Naive thymus-derived CD4-positive, alpha-beta T cell (primary cell): ENCODE measurements at regions of chr1 and their contacts with region 1.

Region 1: DNA sequence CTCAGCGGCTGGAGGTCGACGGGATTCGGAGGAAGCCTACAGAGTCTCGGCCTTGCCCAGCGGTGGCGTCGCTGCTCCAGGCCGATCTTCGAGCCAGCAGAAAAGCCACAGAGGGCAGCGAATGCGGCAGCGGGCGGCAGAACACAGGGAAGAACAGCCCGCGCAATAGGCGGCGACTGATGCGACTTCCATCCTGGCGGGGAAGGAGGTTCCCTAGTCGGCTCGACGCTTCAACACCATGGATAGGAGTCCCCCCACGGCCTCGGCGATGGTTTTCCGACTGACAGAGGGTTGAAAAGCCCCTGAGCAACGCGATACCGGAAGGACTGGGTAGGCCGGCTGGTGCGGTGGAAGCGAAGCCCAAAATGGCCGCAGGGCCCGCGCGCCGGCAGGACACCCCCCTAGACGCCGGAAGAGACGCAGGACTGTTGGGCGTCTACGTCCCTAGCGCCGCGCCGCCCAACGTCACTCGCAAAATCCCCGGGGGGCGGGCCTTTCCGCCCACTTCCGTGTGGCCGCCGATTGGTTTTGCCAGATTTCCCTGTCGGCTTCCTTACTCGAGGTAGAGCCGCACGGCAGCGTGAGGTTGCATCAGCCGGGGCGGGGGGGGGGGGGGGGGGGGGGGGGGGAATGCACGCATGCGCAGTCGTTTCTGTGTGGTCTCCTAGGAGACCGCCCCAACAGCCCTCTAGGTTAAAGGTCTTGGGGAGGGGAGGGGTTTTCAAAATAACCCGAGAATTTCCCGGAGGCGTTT is at the start of gene PPP1R15B:
- DNase-seq: peak; percentile 92 to 99 (median 98)
- ATAC-seq: peak; percentile 91
- H3K4me3 ChIP-seq: peak within 1 kb of the TSS; percentile 99
- H3K4me3 Mint-ChIP-seq: peak within 1 kb of the TSS; percentile 92 to 99 (median 97)
- H3K27ac ChIP-seq: peak within 1 kb of the TSS; percentile 100
- H3K27ac Mint-ChIP-seq: peak within 1 kb of the TSS; percentile 97 to 100 (median 99)
- H3K4me1 ChIP-seq: peaks cover 0 to 5% of the 10 kb centered on the region in 2 donors
- H3K4me1 Mint-ChIP-seq: peaks cover 8 to 23% (median 14%) of the 10 kb centered on the region in 7 donors
- H3K27me3 ChIP-seq: no peaks in the 10 kb centered on the region
- H3K27me3 Mint-ChIP-seq: no peaks in the 10 kb centered on the region
- total RNA-seq, gene PPP1R15B: 69.5 to 175 (median 73.0) TPM

Region 2: DNA sequence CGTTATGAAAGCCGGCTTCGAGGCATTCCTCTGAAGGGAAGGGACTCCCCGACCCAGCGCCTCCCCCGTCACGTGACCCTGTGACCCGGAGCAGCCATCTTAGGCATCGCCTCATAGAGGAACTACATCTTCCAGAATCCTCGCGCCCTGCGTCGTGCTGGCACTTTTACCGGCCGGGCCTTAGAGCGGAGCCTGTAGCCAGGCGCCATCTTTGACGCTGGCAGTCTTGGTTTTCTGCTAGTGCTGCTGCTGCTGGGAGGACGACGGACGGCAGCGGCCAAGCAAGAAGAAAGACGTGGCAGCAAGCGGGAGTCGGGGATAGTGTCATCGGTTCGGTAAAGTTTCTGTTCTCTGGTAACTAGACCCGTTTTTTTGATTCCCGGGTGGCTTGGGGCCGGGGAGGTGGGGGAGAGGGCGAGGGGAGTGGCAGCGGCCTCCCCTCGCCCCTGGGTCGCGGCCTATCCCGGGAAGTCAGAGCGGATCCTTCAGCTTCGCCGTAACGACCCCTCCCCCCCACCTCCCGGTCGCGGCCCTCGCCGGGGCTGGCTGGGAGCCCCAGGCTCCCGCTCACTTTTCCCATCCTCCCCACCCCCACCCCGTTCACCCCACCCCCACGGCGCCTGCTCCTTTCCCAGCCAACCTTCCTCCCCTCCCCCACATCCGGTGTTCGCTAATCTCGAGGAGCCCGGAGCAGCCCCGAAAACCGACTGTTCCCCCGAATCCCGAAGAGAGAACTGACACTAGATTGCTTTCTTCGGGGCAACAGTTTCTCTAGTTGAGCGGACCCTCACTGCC is 616.0 kb before region 1 on chr1 and contains the starts of genes ZBED6 and ZC3H11A:
- CTCF ChIA-PET with region 1: no interaction called
- POLR2A ChIA-PET with region 1: no interaction called
- intact Hi-C with region 1: loop called in 1 of 2 experiments (anchors 1 kb)
- DNase-seq: peak; percentile 85 to 100 (median 97)
- ATAC-seq: peak; percentile 99
- H3K4me3 ChIP-seq: peak within 1 kb of the TSS; percentile 80
- H3K4me3 Mint-ChIP-seq: peak within 1 kb of the TSS; percentile 94 to 98 (median 96)
- H3K27ac ChIP-seq: peak within 1 kb of the TSS; percentile 80
- H3K27ac Mint-ChIP-seq: peak within 1 kb of the TSS; percentile 82 to 98 (median 96)
- H3K4me1 ChIP-seq: peaks cover 35 to 36% of the 10 kb centered on the region in 2 donors
- H3K4me1 Mint-ChIP-seq: peaks cover 18 to 55% (median 48%) of the 10 kb centered on the region in 7 donors
- H3K27me3 ChIP-seq: no peaks in the 10 kb centered on the region
- H3K27me3 Mint-ChIP-seq: no peaks in the 10 kb centered on the region
- total RNA-seq, gene ZBED6: 23.8 to 36.1 (median 31.9) TPM
- total RNA-seq, gene ZC3H11A: 70.9 to 138 (median 91.6) TPM

Region 3: GRCh38 chr1:204431310-204432165 is 19.9 kb after region 1 on chr1:
- CTCF ChIA-PET with region 1: interaction called, 7 read pairs
- POLR2A ChIA-PET with region 1: interaction called, 5 read pairs
- intact Hi-C with region 1: loop called in 1 of 2 experiments (anchors 2 kb)
- DNase-seq: peak; percentile 52 to 75 (median 69)
- ATAC-seq: peak; percentile 88
- H3K4me3 ChIP-seq: no peak overlapping the region
- H3K4me3 Mint-ChIP-seq: no peak overlapping the region
- H3K27ac ChIP-seq: no peak overlapping the region
- H3K27ac Mint-ChIP-seq: peak overlapping the region in 5 of 9 donors; percentile 6 to 69 (median 42)
- H3K4me1 ChIP-seq: no peaks in the 10 kb centered on the region
- H3K4me1 Mint-ChIP-seq: peaks cover 0 to 13% (median 4%) of the 10 kb centered on the region in 7 donors
- H3K27me3 ChIP-seq: no peaks in the 10 kb centered on the region
- H3K27me3 Mint-ChIP-seq: no peaks in the 10 kb centered on the region

Region 4: GRCh38 chr1:205121660-205122488 is 710.2 kb after region 1 on chr1 and contains the start of gene RBBP5:
- CTCF ChIA-PET with region 1: no interaction called
- POLR2A ChIA-PET with region 1: no interaction called
- intact Hi-C with region 1: loop called in 1 of 2 experiments (anchors 10 kb)
- DNase-seq: peak; percentile 87 to 97 (median 93)
- ATAC-seq: peak; percentile 98
- H3K4me3 ChIP-seq: peak within 1 kb of the TSS; percentile 89
- H3K4me3 Mint-ChIP-seq: peak within 1 kb of the TSS; percentile 89 to 99 (median 96)
- H3K27ac ChIP-seq: peak within 1 kb of the TSS; percentile 86
- H3K27ac Mint-ChIP-seq: peak within 1 kb of the TSS; percentile 98 to 100 (median 99)
- H3K4me1 ChIP-seq: peaks cover 18 to 24% of the 10 kb centered on the region in 2 donors
- H3K4me1 Mint-ChIP-seq: peaks cover 30 to 56% (median 51%) of the 10 kb centered on the region in 7 donors
- H3K27me3 ChIP-seq: no peaks in the 10 kb centered on the region
- H3K27me3 Mint-ChIP-seq: no peaks in the 10 kb centered on the region
- total RNA-seq, gene RBBP5: 11.0 to 31.5 (median 21.0) TPM

Region 5: GRCh38 chr1:205750138-205751035 is 1338.8 kb after region 1 on chr1 and contains the start of gene NUCKS1:
- CTCF ChIA-PET with region 1: no interaction called
- POLR2A ChIA-PET with region 1: no interaction called
- intact Hi-C with region 1: loop called in 1 of 2 experiments (anchors 5 kb)
- DNase-seq: peak; percentile 79 to 99 (median 97)
- ATAC-seq: peak; percentile 86
- H3K4me3 ChIP-seq: peak within 1 kb of the TSS; percentile 81
- H3K4me3 Mint-ChIP-seq: peak within 1 kb of the TSS; percentile 83 to 99 (median 96)
- H3K27ac ChIP-seq: peak within 1 kb of the TSS; percentile 95
- H3K27ac Mint-ChIP-seq: peak within 1 kb of the TSS; percentile 96 to 100 (median 98)
- H3K4me1 ChIP-seq: peaks cover 6 to 10% of the 10 kb centered on the region in 2 donors
- H3K4me1 Mint-ChIP-seq: peaks cover 24 to 49% (median 39%) of the 10 kb centered on the region in 7 donors
- H3K27me3 ChIP-seq: no peaks in the 10 kb centered on the region
- H3K27me3 Mint-ChIP-seq: peaks cover 0 to 3% (median 0%) of the 10 kb centered on the region in 5 donors
- total RNA-seq, gene NUCKS1: 70.4 to 164 (median 122) TPM